IMR-90 (cell line): ENCODE measurements at regions of chr12 and their contacts with region 1.

Region 1: DNA sequence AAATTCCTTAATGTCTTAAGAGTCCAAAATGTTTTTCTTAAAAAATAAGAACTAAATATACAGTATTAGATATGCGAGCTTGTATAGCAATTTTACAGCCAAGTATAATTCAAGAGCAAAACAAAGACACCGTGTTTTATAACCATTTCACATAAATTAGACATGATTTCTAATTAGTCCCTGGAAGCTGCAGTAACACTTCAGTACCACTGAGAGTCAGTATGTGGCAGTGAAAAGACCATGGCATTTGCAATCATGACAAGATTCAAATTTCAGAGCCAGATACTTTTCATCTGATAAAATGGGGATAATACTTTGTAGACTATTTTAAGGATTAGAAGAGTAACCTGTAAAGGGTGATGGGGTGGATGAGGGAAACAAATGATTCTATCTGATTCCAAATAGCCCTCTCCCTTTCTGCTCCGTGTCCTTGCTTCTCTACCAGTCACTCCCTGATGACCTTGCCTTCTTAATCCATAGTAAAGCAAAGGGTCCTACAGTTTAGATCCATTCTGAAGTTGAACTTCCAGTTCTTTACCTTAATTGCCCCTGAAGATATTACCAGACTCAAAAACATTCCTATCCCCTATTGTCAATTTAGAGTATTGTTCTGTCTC is 145.4 kb upstream of the ABCD2 start:
- DNase-seq: peak; percentile 58
- ATAC-seq: peak; percentile 86
- H3K4me3 ChIP-seq: no peak overlapping the region
- H3K27ac ChIP-seq: no peak overlapping the region
- H3K4me1 ChIP-seq: no peaks in the 10 kb centered on the region
- H3K27me3 ChIP-seq: no peaks in the 10 kb centered on the region
- CTCF ChIP-seq: peak; percentile 86
- POLR2A ChIP-seq: 0 out of 2 replicates have a peak, but pooled peaks have one; percentile 19
- RAD21 ChIP-seq: peak; percentile 87

Region 2: DNA sequence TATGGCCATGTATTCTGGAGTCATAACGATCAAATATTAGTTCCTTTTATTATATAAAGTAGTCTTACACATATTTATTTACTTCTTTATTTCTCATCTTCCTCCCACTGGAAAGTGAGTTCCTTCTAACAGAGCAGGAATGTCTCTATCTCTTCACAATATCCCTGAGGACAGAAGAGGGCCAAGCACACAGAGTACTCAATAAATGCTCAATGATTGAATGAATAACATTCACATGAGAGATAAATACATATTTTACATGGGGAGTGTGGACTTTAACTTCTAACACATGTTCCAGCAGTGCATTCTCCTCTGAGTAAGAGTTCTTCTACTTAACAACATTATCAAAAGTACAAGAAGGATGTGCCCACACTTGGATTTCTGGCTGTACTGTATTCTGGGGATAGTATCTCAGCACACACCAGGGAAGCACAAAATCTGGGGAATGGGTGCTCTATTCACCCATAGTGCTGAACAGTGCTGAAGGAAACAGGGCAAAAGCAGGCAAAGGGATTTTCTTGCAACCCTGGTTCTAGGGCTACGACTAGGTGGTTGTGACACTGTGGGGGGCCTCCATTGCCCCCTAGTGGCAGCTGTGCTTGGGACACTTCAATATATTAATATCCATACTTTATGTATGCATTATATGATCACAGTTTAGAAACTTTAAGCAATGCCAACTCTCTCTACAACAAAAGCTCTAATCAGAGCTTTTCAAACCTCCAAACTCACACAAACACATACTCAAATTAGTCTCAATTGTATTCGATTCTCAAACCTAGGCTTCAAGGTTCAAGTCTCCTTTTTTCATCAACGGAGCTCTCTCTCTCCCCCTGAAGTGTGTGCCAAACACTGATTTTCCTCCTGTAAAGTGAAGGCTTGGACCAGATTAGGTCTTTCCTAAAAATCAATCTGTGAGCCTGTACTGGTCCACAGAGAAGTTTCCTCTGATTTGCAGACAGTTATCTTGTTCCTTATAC is 225.4 kb after region 1 on chr12:
- CTCF ChIA-PET with region 1: interaction called, 4 read pairs
- POLR2A ChIA-PET with region 1: no interaction called
- dilution Hi-C with region 1: no loop called
- in situ Hi-C with region 1: loop called (anchors 5 kb)
- intact Hi-C with region 1: loop called (anchors 1 kb)
- DNase-seq: peak; percentile 32
- ATAC-seq: peak; percentile 93
- H3K4me3 ChIP-seq: no peak overlapping the region
- H3K27ac ChIP-seq: no peak overlapping the region
- H3K4me1 ChIP-seq: no peaks in the 10 kb centered on the region
- H3K27me3 ChIP-seq: no peaks in the 10 kb centered on the region
- CTCF ChIP-seq: peak; percentile 79
- POLR2A ChIP-seq: no peak
- RAD21 ChIP-seq: peak; percentile 66

Region 3: DNA sequence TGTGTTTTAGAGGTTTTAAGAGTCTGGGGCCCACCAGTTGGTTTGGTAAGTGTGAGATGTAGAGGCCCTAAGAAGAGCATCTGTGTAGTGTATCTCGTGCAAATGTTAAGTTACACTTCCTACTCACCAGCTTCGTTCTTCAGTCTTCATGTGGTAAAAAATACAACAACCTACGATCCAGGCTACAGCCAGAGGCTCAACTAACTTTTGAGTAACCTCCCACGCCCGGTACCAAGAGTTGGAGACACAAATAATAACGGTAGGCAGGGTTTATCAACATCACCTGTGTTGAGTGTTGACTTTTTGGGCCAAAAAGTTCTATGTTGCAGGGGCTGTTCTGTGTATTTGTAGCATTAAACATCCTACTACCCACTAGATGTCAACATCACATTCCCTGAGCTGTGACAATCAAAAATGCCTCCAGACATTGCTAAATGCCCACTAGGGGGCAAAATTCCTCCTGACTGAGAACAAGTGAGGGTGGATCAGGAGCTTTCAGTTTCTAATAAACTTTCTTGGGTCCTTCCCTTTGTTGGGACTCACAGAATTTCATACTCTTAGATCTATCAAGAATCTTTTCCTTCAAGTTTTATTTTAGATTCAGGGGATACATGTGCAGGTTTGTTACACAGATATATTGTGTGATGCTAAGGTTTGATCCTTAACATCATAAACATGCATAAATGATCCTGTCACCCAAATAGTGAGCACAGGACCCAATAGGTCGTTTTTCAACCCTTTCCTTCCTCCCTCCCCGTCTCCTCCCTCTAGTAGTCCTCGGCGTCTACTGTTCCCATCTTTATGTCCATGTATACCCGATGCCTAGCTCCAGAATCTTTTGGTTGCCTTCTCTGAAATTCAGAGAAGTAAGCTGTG is 246.1 kb after region 1 on chr12:
- CTCF ChIA-PET with region 1: interaction called, 3 read pairs
- POLR2A ChIA-PET with region 1: no interaction called
- dilution Hi-C with region 1: no loop called
- in situ Hi-C with region 1: no loop called
- intact Hi-C with region 1: loop called (anchors 10 kb)
- DNase-seq: peak; percentile 72
- ATAC-seq: peak; percentile 91
- H3K4me3 ChIP-seq: peak overlapping the region; percentile 11; the same call in 1 of the 2 replicates
- H3K27ac ChIP-seq: no peak overlapping the region
- H3K4me1 ChIP-seq: 0 out of 2 replicates have a peak, but pooled peaks cover 2% of the 10 kb centered on the region
- H3K27me3 ChIP-seq: no peaks in the 10 kb centered on the region
- CTCF ChIP-seq: peak; percentile 81
- POLR2A ChIP-seq: no peak
- RAD21 ChIP-seq: peak; percentile 67

Region 4: GRCh38 chr12:40107098-40107802 is 342.2 kb after region 1 on chr12:
- CTCF ChIA-PET with region 1: interaction called, 4 read pairs
- POLR2A ChIA-PET with region 1: no interaction called
- dilution Hi-C with region 1: no loop called
- in situ Hi-C with region 1: loop called (anchors 5 kb)
- intact Hi-C with region 1: loop called (anchors 1 kb)
- DNase-seq: peak; percentile 79
- ATAC-seq: peak; percentile 7
- H3K4me3 ChIP-seq: peak overlapping the region; percentile 42; the same call in 1 of the 2 replicates
- H3K27ac ChIP-seq: no peak overlapping the region
- H3K4me1 ChIP-seq: peaks cover 3% of the 10 kb centered on the region; the same call in 1 of the 2 replicates
- H3K27me3 ChIP-seq: 0 out of 2 replicates have a peak, but pooled peaks cover 2% of the 10 kb centered on the region
- CTCF ChIP-seq: peak; percentile 87
- POLR2A ChIP-seq: no peak
- RAD21 ChIP-seq: peak; percentile 77

Region 5: DNA sequence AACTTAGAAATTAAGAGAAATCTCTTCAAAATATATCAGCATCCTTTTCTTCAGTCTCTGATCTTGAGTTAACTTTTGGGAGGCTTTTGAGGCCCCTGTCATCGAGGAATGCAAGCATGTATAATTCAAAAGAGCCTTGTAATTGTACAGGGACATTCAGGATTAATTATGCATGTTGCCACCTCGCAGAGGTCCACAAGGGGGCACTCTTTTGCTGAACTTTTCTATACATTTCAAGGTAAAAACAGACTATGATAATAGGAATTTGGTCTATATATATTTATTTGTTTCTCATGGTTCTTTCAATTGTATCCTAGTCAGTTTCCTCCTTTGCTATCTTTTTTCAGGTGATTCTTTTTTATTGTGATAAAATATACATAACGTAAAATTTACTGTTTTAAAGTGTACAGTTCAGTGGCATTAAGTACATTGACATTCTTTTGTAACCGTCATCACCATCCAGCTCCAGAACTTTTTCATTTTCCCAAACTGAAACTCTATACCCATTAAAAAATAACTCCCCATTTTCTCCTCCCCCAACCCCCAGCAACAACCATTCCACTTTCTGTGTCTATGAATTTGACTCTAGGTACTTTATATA is 387.8 kb after region 1 on chr12:
- CTCF ChIA-PET with region 1: no interaction called
- POLR2A ChIA-PET with region 1: no interaction called
- dilution Hi-C with region 1: no loop called
- in situ Hi-C with region 1: no loop called
- intact Hi-C with region 1: loop called (anchors 5 kb)
- DNase-seq: peak; percentile 32
- ATAC-seq: no peak; the same call in 1 of the 2 replicates
- H3K4me3 ChIP-seq: no peak overlapping the region
- H3K27ac ChIP-seq: no peak overlapping the region
- H3K4me1 ChIP-seq: no peaks in the 10 kb centered on the region
- H3K27me3 ChIP-seq: no peaks in the 10 kb centered on the region
- CTCF ChIP-seq: peak; percentile 76
- POLR2A ChIP-seq: no peak
- RAD21 ChIP-seq: peak; percentile 60

Region 6: GRCh38 chr12:40208707-40209446 is 443.8 kb after region 1 on chr12:
- CTCF ChIA-PET with region 1: no interaction called
- POLR2A ChIA-PET with region 1: no interaction called
- dilution Hi-C with region 1: no loop called
- in situ Hi-C with region 1: no loop called
- intact Hi-C with region 1: no loop called
- DNase-seq: no peak
- ATAC-seq: no peak
- H3K4me3 ChIP-seq: no peak overlapping the region
- H3K27ac ChIP-seq: no peak overlapping the region
- H3K4me1 ChIP-seq: no peaks in the 10 kb centered on the region
- H3K27me3 ChIP-seq: no peaks in the 10 kb centered on the region
- CTCF ChIP-seq: no peak
- POLR2A ChIP-seq: no peak
- RAD21 ChIP-seq: no peak

Region 7: DNA sequence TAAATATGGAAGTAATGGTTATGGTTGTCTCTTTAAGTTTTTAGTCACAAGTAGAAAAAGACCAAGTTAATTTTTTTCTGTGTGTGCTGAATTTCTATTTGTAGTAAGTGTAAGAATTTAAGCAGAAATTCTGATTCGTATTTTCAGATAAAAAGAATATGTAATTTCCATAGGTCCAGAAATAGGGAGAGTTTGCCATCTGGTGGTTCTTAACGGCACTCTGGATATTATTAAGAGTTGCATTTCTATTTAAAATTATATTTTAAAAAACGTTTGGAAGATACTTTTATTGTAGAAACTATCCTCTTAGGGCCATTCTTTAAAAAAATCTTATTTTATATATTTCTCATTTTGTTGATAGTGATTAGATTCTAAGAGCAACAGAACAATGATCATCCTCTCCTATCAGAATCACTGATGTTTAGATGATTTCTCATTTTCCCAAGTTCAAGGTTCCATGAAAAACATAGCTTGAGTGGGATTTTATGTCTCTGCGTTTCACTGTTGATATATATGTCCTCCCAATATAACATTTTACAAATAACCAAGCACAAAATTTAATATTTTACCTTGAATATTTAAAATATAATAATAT is 548.0 kb after region 1 on chr12:
- CTCF ChIA-PET with region 1: no interaction called
- POLR2A ChIA-PET with region 1: no interaction called
- dilution Hi-C with region 1: no loop called
- in situ Hi-C with region 1: no loop called
- intact Hi-C with region 1: loop called (anchors 10 kb)
- DNase-seq: peak; percentile 31
- ATAC-seq: no peak
- H3K4me3 ChIP-seq: no peak overlapping the region
- H3K27ac ChIP-seq: no peak overlapping the region
- H3K4me1 ChIP-seq: no peaks in the 10 kb centered on the region
- H3K27me3 ChIP-seq: no peaks in the 10 kb centered on the region
- CTCF ChIP-seq: peak; percentile 77
- POLR2A ChIP-seq: no peak
- RAD21 ChIP-seq: peak; percentile 68